MCF 10A (cell line): ENCODE measurements at regions of chr9 and their contacts with region 1.

Region 1: DNA sequence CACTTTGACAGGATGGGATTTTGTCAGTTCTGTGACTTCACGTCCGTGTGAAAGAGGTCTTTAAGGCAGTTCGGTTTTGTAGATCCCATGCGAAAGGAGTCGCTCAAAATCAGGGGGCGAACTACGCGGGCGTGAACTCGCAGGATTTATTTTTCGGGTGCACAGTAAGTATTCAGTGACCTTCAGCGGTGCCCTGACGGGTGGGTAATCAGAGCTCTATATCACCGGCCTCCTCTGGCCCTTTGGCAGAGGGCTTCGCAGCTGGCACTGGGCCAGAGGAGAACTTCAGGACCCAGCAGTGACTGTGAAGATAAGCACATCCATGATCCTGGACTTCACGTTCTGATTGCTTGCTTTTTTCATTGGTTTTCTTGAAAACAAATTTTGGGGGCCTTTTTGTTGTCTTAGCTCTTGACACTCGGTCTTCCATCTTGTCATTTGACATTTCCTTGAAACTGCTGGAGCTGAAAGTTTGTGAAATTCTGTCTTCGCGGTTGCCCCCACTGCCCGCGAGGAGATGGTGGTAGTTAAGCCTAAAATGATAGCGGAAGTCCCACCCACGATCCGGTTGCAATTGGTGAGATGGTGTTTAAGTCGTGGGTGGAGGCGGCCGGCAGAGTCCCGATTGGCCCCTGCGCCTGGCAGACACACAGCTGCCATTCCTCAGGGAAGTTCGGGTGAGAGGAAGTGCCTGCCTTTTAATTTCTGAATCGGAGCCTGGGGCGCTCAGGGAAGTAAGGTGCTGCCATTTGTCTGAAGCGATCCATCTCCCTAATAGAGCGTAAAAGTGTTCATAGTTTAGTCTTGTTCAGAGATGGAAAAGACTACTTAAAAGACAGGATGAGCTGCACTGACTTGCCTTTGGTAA is at the start of gene FAM120AOS:
- DNase-seq: peak; percentile 96
- H3K4me3 Mint-ChIP-seq: peak within 1 kb of the TSS; percentile 86
- H3K27ac Mint-ChIP-seq: peak within 1 kb of the TSS; percentile 93
- H3K4me1 Mint-ChIP-seq: peaks cover 36% of the 10 kb centered on the region
- H3K27me3 Mint-ChIP-seq: no peaks in the 10 kb centered on the region
- CTCF ChIP-seq: no peak
- total RNA-seq, gene FAM120AOS: 47.4 and 50.1 TPM in 2 replicates

Region 2: GRCh38 chr9:93436655-93437442 is 16.4 kb before region 1 on chr9:
- CTCF ChIA-PET with region 1: no interaction called
- POLR2A ChIA-PET with region 1: interaction called, 10 read pairs
- intact Hi-C with region 1: no loop called
- DNase-seq: no peak
- H3K4me3 Mint-ChIP-seq: no peak overlapping the region
- H3K27ac Mint-ChIP-seq: no peak overlapping the region
- H3K4me1 Mint-ChIP-seq: no peaks in the 10 kb centered on the region
- H3K27me3 Mint-ChIP-seq: no peaks in the 10 kb centered on the region
- CTCF ChIP-seq: no peak

Region 3: DNA sequence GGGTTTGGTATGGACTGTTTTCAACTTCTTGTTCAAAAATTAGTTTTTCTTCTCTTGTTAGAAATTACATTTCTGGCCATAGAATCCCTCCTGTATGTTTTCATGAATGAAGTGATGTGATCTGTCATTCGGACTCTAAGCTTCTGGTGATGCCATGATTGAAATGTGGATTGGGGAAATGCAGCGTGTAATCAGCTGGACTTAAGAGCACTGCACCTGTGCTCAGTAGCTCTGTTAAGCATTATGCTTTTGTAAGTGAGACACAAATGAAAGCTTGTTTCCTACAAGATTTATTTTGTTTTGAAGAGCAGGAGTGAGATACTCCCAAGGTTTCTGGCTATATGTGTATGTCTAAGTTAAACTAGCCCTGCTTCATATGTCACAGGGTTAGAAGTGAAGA is 24.1 kb after region 1 on chr9:
- CTCF ChIA-PET with region 1: interaction called, 7 read pairs
- POLR2A ChIA-PET with region 1: interaction called, 93 read pairs
- intact Hi-C with region 1: no loop called
- DNase-seq: no peak
- H3K4me3 Mint-ChIP-seq: no peak overlapping the region
- H3K27ac Mint-ChIP-seq: no peak overlapping the region
- H3K4me1 Mint-ChIP-seq: peaks cover 6% of the 10 kb centered on the region
- H3K27me3 Mint-ChIP-seq: no peaks in the 10 kb centered on the region
- CTCF ChIP-seq: no peak

Region 4: GRCh38 chr9:93520523-93520922 is 67.2 kb after region 1 on chr9:
- CTCF ChIA-PET with region 1: no interaction called
- POLR2A ChIA-PET with region 1: no interaction called
- intact Hi-C with region 1: loop called (anchors 5 kb)
- DNase-seq: no peak
- H3K4me3 Mint-ChIP-seq: no peak overlapping the region
- H3K27ac Mint-ChIP-seq: no peak overlapping the region
- H3K4me1 Mint-ChIP-seq: no peaks in the 10 kb centered on the region
- H3K27me3 Mint-ChIP-seq: no peaks in the 10 kb centered on the region
- CTCF ChIP-seq: no peak